Sigmoid colon (tissue), 7 donors: ENCODE measurements at regions of chr2 and their contacts with region 1.

Region 1: GRCh38 chr2:240560480-240561326 is 546 bp downstream of the DUSP28 start:
- DNase-seq: peak; percentile 100
- H3K4me3 ChIP-seq: peak overlapping the region; percentile 68 to 93 (median 85)
- H3K27ac ChIP-seq: peak overlapping the region; percentile 97 to 100 (median 100)
- H3K4me1 ChIP-seq: peaks cover 2 to 52% (median 43%) of the 10 kb centered on the region in 4 donors
- H3K27me3 ChIP-seq: peaks cover 0 to 19% (median 0%) of the 10 kb centered on the region in 3 donors
- CTCF ChIP-seq: peak in 2 of 4 experiments; percentile 33 to 53
- EP300 ChIP-seq: no peak
- POLR2A ChIP-seq: peak; percentile 6 to 86

Region 2: DNA sequence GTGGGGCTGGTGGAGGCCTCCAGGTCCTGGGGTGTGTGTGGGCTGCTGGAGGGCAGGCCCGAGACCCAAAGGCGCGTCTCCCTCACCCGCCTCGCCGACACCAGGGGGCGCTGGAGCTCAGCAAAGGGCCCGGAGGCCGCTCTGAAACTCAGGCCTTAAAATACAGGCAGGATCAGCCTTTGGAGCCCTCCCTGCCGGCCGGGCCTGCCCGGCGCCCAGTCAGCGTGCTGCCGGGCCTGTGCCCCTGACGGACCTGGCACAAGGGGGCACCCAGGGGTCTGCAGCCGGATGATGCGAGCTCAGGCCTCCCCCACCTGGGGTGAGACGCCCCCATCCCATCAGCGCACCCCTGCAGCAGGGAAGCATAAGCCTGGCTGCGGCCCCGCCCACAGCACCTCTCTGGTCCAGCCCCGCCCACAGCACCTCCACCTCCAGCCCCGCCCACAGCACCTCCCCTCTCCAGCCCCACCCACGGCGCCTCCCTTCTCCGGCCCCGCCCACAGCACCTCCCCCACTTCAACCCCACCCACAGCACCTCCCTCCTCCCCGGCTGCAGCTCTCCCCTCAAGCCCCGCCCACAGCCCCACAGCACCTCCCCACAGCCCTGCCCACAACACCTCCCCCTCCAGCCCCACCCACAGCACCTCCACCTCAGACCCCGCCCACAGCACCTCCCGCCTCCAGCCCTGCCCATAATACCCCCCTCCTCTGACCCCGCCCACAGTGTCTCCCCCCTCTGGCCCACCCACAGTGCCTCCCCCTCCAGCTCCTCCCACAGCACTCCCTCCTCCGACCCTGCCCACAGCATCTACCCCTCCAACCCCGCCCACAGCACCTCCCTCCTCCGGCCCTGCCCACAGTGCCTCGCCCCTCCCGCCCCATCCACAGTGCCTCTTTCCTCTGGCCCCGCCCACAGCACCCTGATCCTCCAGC is 327.5 kb before region 1 on chr2:
- intact Hi-C with region 1: loop called (anchors 5 kb)
- DNase-seq: peak; percentile 92
- H3K4me3 ChIP-seq: peak overlapping the region; percentile 14 to 38 (median 26)
- H3K27ac ChIP-seq: peak overlapping the region; percentile 52 to 69 (median 62)
- H3K4me1 ChIP-seq: peaks cover 0 to 20% (median 14%) of the 10 kb centered on the region in 4 donors
- H3K27me3 ChIP-seq: no peaks in the 10 kb centered on the region
- CTCF ChIP-seq: peak; percentile 83 to 93 (median 85)
- EP300 ChIP-seq: peak in 1 of 4 donors; percentile 3
- POLR2A ChIP-seq: no peak

Region 3: GRCh38 chr2:240595496-240596470 is 35.1 kb after region 1 on chr2:
- intact Hi-C with region 1: loop called (anchors 5 kb)
- DNase-seq: peak; percentile 63
- H3K4me3 ChIP-seq: peak overlapping the region in 1 of 4 donors; percentile 7
- H3K27ac ChIP-seq: peak overlapping the region in 3 of 4 donors; percentile 28 to 51 (median 37)
- H3K4me1 ChIP-seq: peaks cover 0 to 41% (median 27%) of the 10 kb centered on the region in 4 donors
- H3K27me3 ChIP-seq: no peaks in the 10 kb centered on the region
- CTCF ChIP-seq: no peak
- EP300 ChIP-seq: no peak
- POLR2A ChIP-seq: no peak

Region 4: DNA sequence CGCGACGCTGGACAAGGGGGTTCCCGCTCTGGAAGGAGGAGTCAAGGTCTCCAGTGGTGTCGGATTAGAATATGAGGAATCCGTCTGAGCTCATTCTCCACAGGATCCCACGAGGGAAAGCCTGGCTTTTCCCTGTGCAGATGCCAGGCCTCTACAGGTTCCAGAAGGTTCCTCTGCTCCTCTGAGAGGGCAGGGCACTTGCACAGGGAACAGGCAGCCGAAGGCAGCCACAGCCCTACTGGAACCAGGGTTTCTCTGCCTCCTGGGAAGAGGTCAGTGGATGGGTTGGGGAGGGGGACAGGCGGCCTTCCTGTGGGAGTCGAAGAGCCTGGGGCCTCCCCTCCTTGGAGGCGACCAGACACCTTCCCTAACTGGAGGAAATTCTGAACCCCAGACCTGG is 129.3 kb after region 1 on chr2:
- intact Hi-C with region 1: no loop called
- DNase-seq: no peak
- H3K4me3 ChIP-seq: no peak overlapping the region
- H3K27ac ChIP-seq: no peak overlapping the region
- H3K4me1 ChIP-seq: no peaks in the 10 kb centered on the region
- H3K27me3 ChIP-seq: no peaks in the 10 kb centered on the region
- CTCF ChIP-seq: no peak
- EP300 ChIP-seq: no peak
- POLR2A ChIP-seq: no peak

Region 5: DNA sequence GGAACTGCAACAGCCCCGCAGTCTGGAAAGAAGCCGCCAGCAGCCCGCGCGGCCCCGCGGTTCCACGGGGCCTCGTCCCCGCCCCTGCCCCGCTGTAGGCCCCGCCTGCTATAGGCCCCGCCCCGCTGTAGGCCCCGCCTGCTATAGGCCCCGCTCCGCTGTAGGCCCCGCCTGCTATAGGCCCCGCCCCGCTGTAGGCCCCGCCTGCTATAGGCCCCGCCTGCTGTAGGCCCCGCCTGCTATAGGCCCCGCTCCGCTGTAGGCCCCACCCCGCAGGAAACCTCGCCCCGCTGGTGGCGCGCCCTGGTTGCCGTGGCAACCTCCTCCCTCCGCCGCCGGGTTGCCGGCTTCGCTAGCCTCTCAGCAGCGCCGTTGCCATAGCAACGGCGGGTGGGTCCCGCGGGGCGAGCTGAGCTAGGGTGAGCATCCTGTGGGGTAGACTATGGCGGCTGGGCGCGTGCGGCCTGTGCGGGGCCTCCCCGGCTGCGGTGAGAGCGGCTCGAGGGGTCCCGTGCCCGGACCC is 271.6 kb after region 1 on chr2:
- intact Hi-C with region 1: loop called (anchors 10 kb)
- DNase-seq: peak; percentile 95
- H3K4me3 ChIP-seq: peak overlapping the region in 3 of 4 donors; percentile 16 to 41 (median 37)
- H3K27ac ChIP-seq: peak overlapping the region in 1 of 4 donors; percentile 37
- H3K4me1 ChIP-seq: peaks cover 0 to 20% (median 13%) of the 10 kb centered on the region in 4 donors
- H3K27me3 ChIP-seq: peaks cover 0 to 29% (median 17%) of the 10 kb centered on the region in 3 donors
- CTCF ChIP-seq: no peak
- EP300 ChIP-seq: no peak
- POLR2A ChIP-seq: no peak